ENCODE measurements at regions of chr13 and their contacts with region 1.

Region 1: GRCh38 chr13:20495082-20496023 is 30.3 kb downstream of the CRYL1 start:
- DNase-seq: peak in 4 of 5 donors; percentile 29 to 67 (median 44)
- H3K4me3 ChIP-seq: no peak overlapping the region
- H3K27ac ChIP-seq: no peak overlapping the region
- H3K4me1 ChIP-seq: no peaks in the 10 kb centered on the region
- H3K27me3 ChIP-seq: no peaks in the 10 kb centered on the region
- CTCF ChIP-seq: peak; percentile 72 to 83 (median 78)
- EP300 ChIP-seq: no peak
- POLR2A ChIP-seq: no peak

Region 2: GRCh38 chr13:20703780-20704445 is 208.6 kb after region 1 on chr13:
- intact Hi-C with region 1: loop called in 1 of 4 experiments (anchors 10 kb)
- DNase-seq: peak; percentile 70 to 86 (median 77)
- H3K4me3 ChIP-seq: peak overlapping the region; percentile 46
- H3K27ac ChIP-seq: peak overlapping the region; percentile 57 to 62
- H3K4me1 ChIP-seq: peaks cover 2% of the 10 kb centered on the region
- H3K27me3 ChIP-seq: no peaks in the 10 kb centered on the region
- CTCF ChIP-seq: peak; percentile 17 to 81 (median 72)
- EP300 ChIP-seq: no peak
- POLR2A ChIP-seq: no peak

Region 3: GRCh38 chr13:20713751-20714150 is 218.4 kb after region 1 on chr13:
- intact Hi-C with region 1: loop called in 2 of 4 experiments (anchors 10 kb)
- DNase-seq: peak in 1 of 5 donors; percentile 43
- H3K4me3 ChIP-seq: no peak overlapping the region
- H3K27ac ChIP-seq: peak overlapping the region in 1 of 2 donors; percentile 65
- H3K4me1 ChIP-seq: peaks cover 11% of the 10 kb centered on the region
- H3K27me3 ChIP-seq: no peaks in the 10 kb centered on the region
- CTCF ChIP-seq: no peak
- EP300 ChIP-seq: no peak
- POLR2A ChIP-seq: no peak

Region 4: GRCh38 chr13:20828539-20829364 is 333.4 kb after region 1 on chr13:
- intact Hi-C with region 1: loop called in 1 of 4 experiments (anchors 10 kb)
- DNase-seq: peak in 1 of 5 donors; percentile 31
- H3K4me3 ChIP-seq: no peak overlapping the region
- H3K27ac ChIP-seq: no peak overlapping the region
- H3K4me1 ChIP-seq: no peaks in the 10 kb centered on the region
- H3K27me3 ChIP-seq: no peaks in the 10 kb centered on the region
- CTCF ChIP-seq: peak; percentile 51 to 67 (median 66)
- EP300 ChIP-seq: no peak
- POLR2A ChIP-seq: no peak

Region 5: GRCh38 chr13:20924758-20925394 is 429.5 kb after region 1 on chr13:
- intact Hi-C with region 1: loop called (anchors 5 to 10 kb)
- DNase-seq: peak; percentile 73 to 85 (median 77)
- H3K4me3 ChIP-seq: no peak overlapping the region
- H3K27ac ChIP-seq: no peak overlapping the region
- H3K4me1 ChIP-seq: no peaks in the 10 kb centered on the region
- H3K27me3 ChIP-seq: no peaks in the 10 kb centered on the region
- CTCF ChIP-seq: peak in 2 of 3 donors; percentile 42 to 51
- EP300 ChIP-seq: no peak
- POLR2A ChIP-seq: no peak